PC-9 (cell line): ENCODE measurements at regions of chr15 and their contacts with region 1.

Region 1: GRCh38 chr15:99565299-99566156 is at the start of gene MEF2A:
- DNase-seq: peak; percentile 65 to 90
- H3K4me3 ChIP-seq: peak within 1 kb of the TSS; percentile 72
- H3K27ac ChIP-seq: peak within 1 kb of the TSS; percentile 72
- H3K4me1 ChIP-seq: peaks cover 22% of the 10 kb centered on the region
- H3K27me3 ChIP-seq: no peaks in the 10 kb centered on the region
- CTCF ChIP-seq: no peak
- total RNA-seq, gene MEF2A: 25.7 and 31.8 TPM in 2 replicates

Region 2: GRCh38 chr15:99282121-99282520 is 283.4 kb before region 1 on chr15:
- CTCF ChIA-PET with region 1: no interaction called
- POLR2A ChIA-PET with region 1: no interaction called
- intact Hi-C with region 1: loop called (anchors 10 kb)
- DNase-seq: no peak
- H3K4me3 ChIP-seq: no peak overlapping the region
- H3K27ac ChIP-seq: no peak overlapping the region
- H3K4me1 ChIP-seq: no peaks in the 10 kb centered on the region
- H3K27me3 ChIP-seq: no peaks in the 10 kb centered on the region
- CTCF ChIP-seq: no peak

Region 3: DNA sequence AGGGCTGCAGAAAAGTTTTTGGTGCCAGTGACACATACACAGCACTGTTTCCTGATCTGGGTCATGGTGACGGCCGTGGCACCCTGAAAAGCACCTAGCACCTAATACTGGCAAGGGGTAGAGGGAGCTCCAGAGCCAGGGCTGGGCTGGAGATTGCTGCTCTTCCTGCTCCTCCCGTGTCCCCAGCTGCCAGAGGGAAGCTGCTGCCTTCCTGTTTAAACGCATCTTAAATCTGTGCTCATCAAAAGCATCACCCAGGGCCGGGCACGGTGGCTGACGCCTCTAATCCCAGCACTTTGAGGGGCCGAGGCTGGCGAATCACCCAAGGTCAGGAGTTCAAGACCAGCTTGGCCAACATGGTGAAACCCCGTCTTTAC is 156.4 kb before region 1 on chr15:
- CTCF ChIA-PET with region 1: no interaction called
- POLR2A ChIA-PET with region 1: no interaction called
- intact Hi-C with region 1: loop called (anchors 2 kb)
- DNase-seq: peak; percentile 38 to 60
- H3K4me3 ChIP-seq: no peak overlapping the region
- H3K27ac ChIP-seq: no peak overlapping the region
- H3K4me1 ChIP-seq: no peaks in the 10 kb centered on the region
- H3K27me3 ChIP-seq: no peaks in the 10 kb centered on the region
- CTCF ChIP-seq: peak; percentile 70

Region 4: DNA sequence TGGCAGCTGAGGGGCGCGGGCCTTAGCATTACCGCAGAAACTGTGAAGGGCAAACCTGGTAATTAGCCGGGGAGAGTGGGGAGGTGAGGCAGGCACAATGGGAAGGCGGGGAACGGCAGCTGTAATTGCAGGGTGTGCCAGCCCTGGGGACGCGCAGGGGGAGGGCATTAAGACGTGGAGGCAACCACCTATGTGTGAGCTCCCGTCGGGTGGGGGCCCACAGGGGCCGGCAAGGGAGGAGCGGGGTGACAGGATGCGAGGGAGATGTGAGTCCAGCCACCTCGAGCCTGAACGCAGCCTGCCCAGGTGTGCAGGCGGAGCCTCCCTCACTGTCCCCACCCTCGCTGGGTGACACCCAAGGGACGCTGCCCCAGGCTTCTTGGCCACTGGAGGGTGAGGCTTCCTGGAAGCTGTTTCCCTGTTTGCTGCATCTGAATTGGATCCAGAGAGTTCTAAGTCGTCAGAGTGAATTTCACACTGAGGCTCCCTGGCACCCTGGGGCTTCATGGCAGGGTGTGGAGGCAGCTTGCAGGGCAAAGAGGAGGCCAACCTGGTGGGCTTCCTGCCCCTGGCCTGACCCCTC is 130.3 kb before region 1 on chr15:
- CTCF ChIA-PET with region 1: no interaction called
- POLR2A ChIA-PET with region 1: no interaction called
- intact Hi-C with region 1: loop called (anchors 5 kb)
- DNase-seq: peak; percentile 77 to 95
- H3K4me3 ChIP-seq: peak overlapping the region; percentile 52
- H3K27ac ChIP-seq: peak overlapping the region; percentile 52
- H3K4me1 ChIP-seq: peaks cover 30% of the 10 kb centered on the region
- H3K27me3 ChIP-seq: no peaks in the 10 kb centered on the region
- CTCF ChIP-seq: no peak

Region 5: DNA sequence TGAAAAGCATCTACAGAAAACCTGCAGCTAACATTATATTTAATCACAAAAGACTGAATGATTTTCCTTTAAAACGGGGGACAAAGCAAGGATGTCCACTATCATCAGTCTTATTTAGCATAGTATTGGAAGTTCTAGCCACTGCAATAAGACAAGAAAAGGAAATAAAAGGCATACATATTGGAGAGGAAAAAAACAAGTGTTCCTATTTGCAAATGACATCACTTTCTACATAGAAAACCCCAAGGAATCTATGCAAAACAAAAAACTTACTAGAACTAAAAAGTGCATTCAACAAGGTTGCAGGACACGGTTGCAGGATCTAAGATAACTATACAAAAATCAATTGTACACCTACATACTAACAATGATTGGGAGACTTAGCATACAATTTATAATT is 101.4 kb before region 1 on chr15:
- CTCF ChIA-PET with region 1: no interaction called
- POLR2A ChIA-PET with region 1: interaction called, 11 read pairs
- intact Hi-C with region 1: no loop called
- DNase-seq: no peak
- H3K4me3 ChIP-seq: no peak overlapping the region
- H3K27ac ChIP-seq: no peak overlapping the region
- H3K4me1 ChIP-seq: no peaks in the 10 kb centered on the region
- H3K27me3 ChIP-seq: no peaks in the 10 kb centered on the region
- CTCF ChIP-seq: no peak

Region 6: DNA sequence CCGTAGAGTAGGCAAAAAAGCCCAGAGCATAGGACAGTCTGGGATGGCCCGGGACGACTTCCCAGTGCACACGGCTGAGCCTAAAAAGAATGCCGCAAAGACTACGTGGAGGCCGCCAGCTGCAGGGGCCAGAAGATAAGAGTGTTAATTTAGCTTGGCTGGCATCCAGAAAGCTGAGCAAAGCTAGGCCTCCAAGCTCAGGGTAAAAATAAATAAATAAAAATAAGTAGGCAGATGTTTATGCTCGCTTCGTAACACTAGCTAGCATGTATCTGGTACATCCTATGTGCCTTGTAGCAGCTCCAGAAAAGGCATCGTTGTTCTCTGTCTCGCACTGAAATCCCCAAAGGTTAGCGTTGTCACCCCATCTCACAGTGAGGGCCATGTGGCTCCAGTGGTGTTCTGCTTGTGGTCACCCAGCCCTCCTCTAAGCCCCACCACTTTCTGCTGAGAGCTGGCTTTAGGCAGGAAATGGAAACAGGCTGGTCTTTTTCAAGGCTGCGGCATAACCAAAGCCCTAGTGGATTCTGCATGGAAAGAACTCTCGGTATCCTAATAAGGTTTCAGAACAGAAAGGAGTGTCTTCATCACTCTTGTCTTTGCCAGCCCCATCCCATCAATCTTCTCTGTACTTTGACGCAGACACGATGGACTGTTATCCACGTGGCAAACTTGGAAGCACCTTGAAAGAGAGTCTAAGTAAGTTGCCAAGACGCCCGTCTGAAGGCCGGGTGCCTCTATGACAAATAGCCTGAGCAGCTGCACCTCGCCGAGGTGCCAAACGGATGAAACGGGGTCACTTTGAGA is 57.8 kb before region 1 on chr15:
- CTCF ChIA-PET with region 1: no interaction called
- POLR2A ChIA-PET with region 1: no interaction called
- intact Hi-C with region 1: no loop called
- DNase-seq: no peak
- H3K4me3 ChIP-seq: no peak overlapping the region
- H3K27ac ChIP-seq: no peak overlapping the region
- H3K4me1 ChIP-seq: 0 out of 2 replicates have a peak, but pooled peaks cover 3% of the 10 kb centered on the region
- H3K27me3 ChIP-seq: no peaks in the 10 kb centered on the region
- CTCF ChIP-seq: no peak

Region 7: DNA sequence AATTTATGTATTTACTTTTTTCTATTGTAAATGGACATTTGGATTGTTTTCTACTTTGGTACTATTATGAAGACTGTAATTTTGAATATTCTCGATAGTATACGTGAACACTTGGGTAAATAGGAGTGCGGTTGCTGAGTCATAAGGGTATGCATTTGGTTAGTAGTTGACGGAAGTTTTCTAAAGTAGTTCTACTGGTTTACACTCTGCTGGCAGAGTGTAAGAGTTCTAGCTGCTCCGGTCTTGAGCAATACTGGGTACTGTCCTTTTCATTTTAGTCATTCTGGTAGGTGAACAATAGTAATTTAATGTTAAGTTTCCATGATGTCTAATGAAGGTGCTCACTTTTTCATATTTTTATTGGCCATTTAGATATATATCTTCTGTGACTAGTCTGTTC is 70.3 kb after region 1 on chr15:
- CTCF ChIA-PET with region 1: no interaction called
- POLR2A ChIA-PET with region 1: no interaction called
- intact Hi-C with region 1: loop called (anchors 2 kb)
- DNase-seq: peak; percentile 25 to 92
- H3K4me3 ChIP-seq: no peak overlapping the region
- H3K27ac ChIP-seq: peak overlapping the region; percentile 53
- H3K4me1 ChIP-seq: peaks cover 22% of the 10 kb centered on the region
- H3K27me3 ChIP-seq: no peaks in the 10 kb centered on the region
- CTCF ChIP-seq: no peak

Region 8: DNA sequence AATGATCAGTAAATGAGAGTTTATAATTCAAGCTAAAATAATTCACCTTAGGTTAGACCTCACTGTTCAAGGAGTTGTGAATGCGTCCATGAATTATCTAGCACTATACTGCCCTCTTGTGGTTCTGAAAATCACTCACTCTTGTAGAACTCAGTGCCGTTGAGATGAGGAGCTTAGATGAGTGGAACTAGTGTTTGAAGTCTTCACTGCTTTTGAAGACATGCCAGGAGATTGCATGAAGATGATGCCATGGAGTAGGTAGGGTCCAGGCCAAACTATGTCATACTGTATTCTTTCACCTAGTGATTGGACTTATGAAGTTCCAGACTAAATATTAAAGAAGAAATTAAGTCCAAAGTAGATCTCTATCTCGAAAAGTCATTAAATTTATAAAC is 138.9 kb after region 1 on chr15:
- CTCF ChIA-PET with region 1: interaction called, 5 read pairs
- POLR2A ChIA-PET with region 1: interaction called, 3 read pairs
- intact Hi-C with region 1: loop called (anchors 5 kb)
- DNase-seq: peak; percentile 35 to 71
- H3K4me3 ChIP-seq: no peak overlapping the region
- H3K27ac ChIP-seq: peak overlapping the region; percentile 66; the same call in 1 of the 2 replicates
- H3K4me1 ChIP-seq: peaks cover 11% of the 10 kb centered on the region
- H3K27me3 ChIP-seq: no peaks in the 10 kb centered on the region
- CTCF ChIP-seq: peak; percentile 79